Activated T-helper 1 cell treated with anti-CD3 and anti-CD28 coated beads, Interleukin-12 subunit alpha, Interleukin-12 subunit beta, Interleukin-2, Interleukin-4 antibody, amounts not matched to agents 30 ng/mL and 10 ng/mL and 1 ng/mL, durations not matched to agents 14 hours and 24 hours and 36 hours (primary cell): ENCODE measurements at regions of chr6 and their contacts with region 1.

Region 1: DNA sequence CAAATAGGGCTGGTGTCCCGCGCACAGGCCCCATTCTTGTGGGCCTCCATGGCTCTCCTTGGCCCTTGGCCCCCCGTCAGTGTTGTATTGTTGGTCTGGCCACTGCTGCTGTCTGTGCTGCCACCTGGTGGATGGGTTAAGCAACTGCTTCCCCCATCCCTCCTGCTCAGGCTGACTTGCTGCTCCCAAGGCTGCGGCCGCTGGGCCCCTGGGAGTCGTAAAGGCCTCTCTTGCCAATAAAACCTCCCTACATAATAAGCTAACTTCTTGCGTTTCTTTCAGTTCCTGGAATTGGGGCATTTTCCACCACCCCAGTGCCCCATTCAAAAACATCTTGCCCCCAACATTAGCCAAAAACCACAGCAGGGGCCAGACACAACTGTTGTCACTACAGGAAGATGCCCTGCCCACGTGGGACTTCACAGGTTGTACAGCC is 27.1 kb downstream of the CD83 start:
- DNase-seq: peak; percentile 48
- H3K4me3 Mint-ChIP-seq: no peak overlapping the region
- H3K27ac Mint-ChIP-seq: no peak overlapping the region
- H3K4me1 Mint-ChIP-seq: peaks cover 12% of the 10 kb centered on the region
- H3K27me3 Mint-ChIP-seq: peaks cover 3% of the 10 kb centered on the region

Region 2: GRCh38 chr6:13908955-13909381 is 235.7 kb before region 1 on chr6:
- intact Hi-C with region 1: loop called (anchors 1 kb)
- DNase-seq: peak; percentile 10
- H3K4me3 Mint-ChIP-seq: no peak overlapping the region
- H3K27ac Mint-ChIP-seq: no peak overlapping the region
- H3K4me1 Mint-ChIP-seq: no peaks in the 10 kb centered on the region
- H3K27me3 Mint-ChIP-seq: peaks cover 35% of the 10 kb centered on the region

Region 3: GRCh38 chr6:13953061-13953705 is 191.5 kb before region 1 on chr6:
- intact Hi-C with region 1: no loop called
- DNase-seq: no peak
- H3K4me3 Mint-ChIP-seq: no peak overlapping the region
- H3K27ac Mint-ChIP-seq: no peak overlapping the region
- H3K4me1 Mint-ChIP-seq: no peaks in the 10 kb centered on the region
- H3K27me3 Mint-ChIP-seq: peaks cover 2% of the 10 kb centered on the region

Region 4: DNA sequence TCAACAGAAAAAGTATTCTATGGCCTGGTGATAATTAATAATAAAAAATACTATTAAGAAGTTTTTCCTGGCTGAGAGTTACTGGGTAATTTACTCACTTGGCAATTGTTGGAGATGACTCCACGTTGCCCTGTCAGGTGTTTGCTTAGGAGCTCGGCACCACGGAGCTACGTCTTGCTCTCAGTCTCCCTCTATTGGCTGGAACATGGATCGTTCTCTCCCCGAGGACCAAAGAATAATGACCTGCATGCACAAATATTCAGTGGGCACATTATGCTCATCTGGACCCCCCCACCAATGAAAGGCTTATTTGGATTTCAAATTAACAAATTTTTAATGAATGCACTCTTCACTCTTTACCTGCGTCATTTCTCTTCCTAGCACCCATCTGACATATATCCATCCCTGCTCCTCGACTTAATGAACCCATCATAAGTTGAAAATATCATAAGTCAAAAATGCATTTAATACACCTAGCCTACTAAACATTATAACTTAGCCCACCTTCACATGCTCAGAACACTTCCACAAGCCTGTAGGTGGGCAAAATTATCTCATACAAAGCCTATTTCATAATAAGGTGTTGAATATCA is 98.1 kb before region 1 on chr6:
- intact Hi-C with region 1: loop called (anchors 1 kb)
- DNase-seq: peak; percentile 27
- H3K4me3 Mint-ChIP-seq: no peak overlapping the region
- H3K27ac Mint-ChIP-seq: no peak overlapping the region
- H3K4me1 Mint-ChIP-seq: no peaks in the 10 kb centered on the region
- H3K27me3 Mint-ChIP-seq: peaks cover 29% of the 10 kb centered on the region

Region 5: DNA sequence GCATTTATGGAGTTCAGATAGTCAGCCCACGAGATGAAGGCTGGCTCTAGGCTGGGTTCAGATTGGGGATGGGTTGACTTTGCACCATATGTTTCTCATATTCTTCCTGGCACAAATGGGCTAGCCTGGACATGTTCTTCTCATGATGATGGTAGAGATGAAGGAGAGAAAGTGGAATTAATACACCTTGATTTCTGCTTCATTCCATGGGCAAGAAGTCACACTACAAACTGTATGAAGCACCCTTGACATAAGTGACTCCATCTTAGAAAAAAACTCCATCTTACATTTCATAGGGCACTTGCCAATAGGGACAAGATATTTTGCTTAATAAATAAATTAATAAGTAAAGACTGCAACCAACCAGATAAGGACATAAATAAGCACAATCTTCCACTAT is 39.1 kb before region 1 on chr6:
- intact Hi-C with region 1: no loop called
- DNase-seq: no peak
- H3K4me3 Mint-ChIP-seq: no peak overlapping the region
- H3K27ac Mint-ChIP-seq: no peak overlapping the region
- H3K4me1 Mint-ChIP-seq: peaks cover 33% of the 10 kb centered on the region
- H3K27me3 Mint-ChIP-seq: peaks cover 12% of the 10 kb centered on the region

Region 6: DNA sequence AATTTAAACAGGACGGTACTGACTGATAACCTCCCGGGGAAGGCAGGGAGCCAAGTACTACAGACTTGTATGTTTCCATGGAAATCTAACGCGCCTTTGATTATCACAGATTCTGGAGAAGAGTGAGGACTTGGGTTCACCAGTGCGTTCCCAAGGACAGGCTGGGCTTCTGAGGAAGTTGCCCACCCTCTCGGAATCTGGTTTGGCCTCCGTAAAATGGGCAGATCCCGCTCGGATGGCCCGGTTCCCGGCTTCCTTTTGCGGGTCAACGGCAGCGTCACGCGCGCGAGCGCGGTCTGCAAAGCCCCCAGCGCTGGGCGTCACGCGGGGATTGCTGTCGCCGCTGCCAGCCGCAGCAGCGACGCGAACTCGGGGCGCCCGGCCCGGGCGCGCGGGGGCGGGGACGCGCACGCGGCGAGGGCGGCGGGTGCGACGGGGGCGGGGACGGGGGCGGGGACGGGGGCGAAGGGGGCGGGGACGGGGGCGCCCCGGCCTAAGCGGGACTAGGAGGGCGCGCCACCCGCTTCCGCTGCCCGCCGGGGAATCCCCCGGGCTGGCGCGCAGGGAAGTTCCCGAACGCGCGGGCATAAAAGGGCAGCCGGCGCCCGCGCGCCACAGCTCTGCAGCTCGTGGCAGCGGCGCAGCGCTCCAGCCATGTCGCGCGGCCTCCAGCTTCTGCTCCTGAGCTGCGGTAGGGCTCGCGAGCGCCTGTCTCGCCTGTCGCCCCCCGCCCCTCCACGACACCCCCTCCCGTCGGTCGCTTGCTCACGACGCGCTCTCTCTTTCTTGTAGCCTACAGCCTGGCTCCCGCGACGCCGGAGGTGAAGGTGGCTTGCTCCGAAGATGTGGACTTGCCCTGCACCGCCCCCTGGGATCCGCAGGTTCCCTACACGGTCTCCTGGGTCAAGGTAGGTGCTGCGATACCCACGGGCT is 27.3 kb before region 1 on chr6 and contains the start of gene CD83:
- intact Hi-C with region 1: loop called (anchors 2 kb)
- DNase-seq: peak; percentile 82
- H3K4me3 Mint-ChIP-seq: peak within 1 kb of the TSS; percentile 96
- H3K27ac Mint-ChIP-seq: peak within 1 kb of the TSS; percentile 83
- H3K4me1 Mint-ChIP-seq: peaks cover 46% of the 10 kb centered on the region
- H3K27me3 Mint-ChIP-seq: peaks cover 36% of the 10 kb centered on the region
- total RNA-seq, gene CD83: 101 and 107 TPM in 2 replicates

Region 7: DNA sequence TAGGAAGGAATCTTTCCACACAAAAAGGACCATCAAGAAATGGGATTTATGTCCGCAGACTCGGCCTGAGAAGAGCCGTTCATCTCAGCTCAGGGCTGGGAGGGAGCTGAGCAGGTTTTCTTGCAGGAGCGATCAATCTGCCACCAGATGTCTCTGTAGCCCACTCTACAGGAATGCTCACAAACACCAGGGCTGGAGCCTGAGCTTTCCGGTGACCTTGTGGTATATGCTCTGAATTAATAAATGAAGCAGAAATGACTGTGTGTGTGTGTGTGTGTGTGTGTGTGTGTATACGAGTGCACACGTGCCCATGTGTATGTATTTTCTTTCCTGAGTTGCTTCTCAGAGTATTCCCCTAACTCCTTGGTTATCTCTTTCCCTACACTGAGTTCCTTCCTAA is 15.1 kb before region 1 on chr6:
- intact Hi-C with region 1: no loop called
- DNase-seq: no peak
- H3K4me3 Mint-ChIP-seq: no peak overlapping the region
- H3K27ac Mint-ChIP-seq: no peak overlapping the region
- H3K4me1 Mint-ChIP-seq: peaks cover 49% of the 10 kb centered on the region
- H3K27me3 Mint-ChIP-seq: peaks cover 1% of the 10 kb centered on the region